ENCODE measurements at regions of chr11 and their contacts with region 1.

Region 1: GRCh38 chr11:64742889-64743590 is 902 bp downstream of the RASGRP2 start:
- DNase-seq: peak; percentile 60 to 91 (median 78)
- ATAC-seq: peak; percentile 45
- H3K4me3 ChIP-seq: peak overlapping the region; percentile 98
- H3K4me3 Mint-ChIP-seq: peak overlapping the region in 9 of 10 donors; percentile 89 to 99 (median 97)
- H3K27ac ChIP-seq: peak overlapping the region; percentile 97
- H3K27ac Mint-ChIP-seq: peak overlapping the region in 5 of 9 donors; percentile 88 to 100 (median 98)
- H3K4me1 ChIP-seq: peaks cover 9 to 16% of the 10 kb centered on the region in 2 donors
- H3K4me1 Mint-ChIP-seq: peaks cover 18 to 47% (median 39%) of the 10 kb centered on the region in 7 donors
- H3K27me3 ChIP-seq: no peaks in the 10 kb centered on the region
- H3K27me3 Mint-ChIP-seq: no peaks in the 10 kb centered on the region

Region 2: DNA sequence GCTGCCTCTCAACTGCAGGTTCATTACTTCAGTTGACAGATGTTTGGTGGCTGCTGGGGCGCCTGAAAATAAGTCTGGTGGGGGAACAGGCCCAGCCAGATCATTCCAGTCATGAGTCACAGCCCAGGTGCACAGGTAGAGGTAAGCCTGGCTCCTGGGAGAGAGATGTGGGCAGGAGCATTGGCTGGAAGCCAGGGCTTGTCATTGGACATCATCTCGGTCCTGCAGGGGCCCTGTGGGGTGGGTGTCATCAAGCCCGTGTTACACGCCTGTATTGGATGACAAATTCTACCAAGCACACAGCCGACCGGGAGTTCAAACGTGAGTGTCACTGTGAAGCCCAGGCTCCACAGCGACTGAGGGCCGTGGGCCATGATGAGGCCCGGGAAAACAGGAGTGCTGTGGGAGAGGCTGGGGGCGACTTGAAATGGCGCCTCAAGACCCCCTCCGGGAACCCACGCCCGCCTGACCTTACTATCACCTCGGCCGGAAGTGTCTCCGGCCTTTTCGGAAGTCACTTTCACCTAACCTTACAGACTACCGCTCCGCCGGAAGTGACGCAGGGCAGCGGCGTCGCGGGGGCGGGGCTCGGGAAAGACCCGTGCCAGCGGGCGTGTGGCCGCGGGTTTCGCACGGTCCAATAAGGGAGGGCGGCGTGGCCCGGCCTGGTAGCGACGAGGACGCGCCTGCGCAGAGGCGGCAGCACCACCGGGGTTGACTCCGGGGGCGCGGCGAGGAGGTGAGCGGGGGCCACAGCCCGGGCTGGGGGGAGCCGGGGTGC is 502.5 kb before region 1 on chr11 and contains the start of gene FKBP2:
- CTCF ChIA-PET with region 1: no interaction called
- POLR2A ChIA-PET with region 1: interaction called, 4 read pairs
- intact Hi-C with region 1: loop called in 1 of 2 experiments (anchors 5 kb)
- DNase-seq: peak; percentile 97 to 99 (median 98)
- ATAC-seq: peak; percentile 78
- H3K4me3 ChIP-seq: peak within 1 kb of the TSS; percentile 73
- H3K4me3 Mint-ChIP-seq: peak within 1 kb of the TSS; percentile 80 to 95 (median 89)
- H3K27ac ChIP-seq: peak within 1 kb of the TSS; percentile 99
- H3K27ac Mint-ChIP-seq: peak within 1 kb of the TSS; percentile 97 to 100 (median 99)
- H3K4me1 ChIP-seq: peaks cover 24 to 28% of the 10 kb centered on the region in 2 donors
- H3K4me1 Mint-ChIP-seq: peaks cover 9 to 46% (median 31%) of the 10 kb centered on the region in 7 donors
- H3K27me3 ChIP-seq: no peaks in the 10 kb centered on the region
- H3K27me3 Mint-ChIP-seq: no peaks in the 10 kb centered on the region
- total RNA-seq, gene FKBP2: 20.3 to 46.6 (median 33.5) TPM

Region 3: GRCh38 chr11:64688534-64688982 is 54.5 kb before region 1 on chr11:
- CTCF ChIA-PET with region 1: interaction called, 11 read pairs
- POLR2A ChIA-PET with region 1: interaction called, 9 read pairs
- intact Hi-C with region 1: loop called (anchors 1 kb)
- DNase-seq: peak; percentile 76 to 91 (median 86)
- ATAC-seq: peak; percentile 99
- H3K4me3 ChIP-seq: peak overlapping the region; percentile 53
- H3K4me3 Mint-ChIP-seq: peak overlapping the region; percentile 30 to 76 (median 58)
- H3K27ac ChIP-seq: no peak overlapping the region
- H3K27ac Mint-ChIP-seq: peak overlapping the region in 5 of 9 donors; percentile 13 to 80 (median 25)
- H3K4me1 ChIP-seq: peaks cover 6 to 7% of the 10 kb centered on the region in 2 donors
- H3K4me1 Mint-ChIP-seq: peaks cover 9 to 29% (median 23%) of the 10 kb centered on the region in 7 donors
- H3K27me3 ChIP-seq: peaks cover under 1 to 2% of the 10 kb centered on the region in 2 donors
- H3K27me3 Mint-ChIP-seq: peaks cover 16 to 40% (median 18%) of the 10 kb centered on the region in 5 donors

Region 4: GRCh38 chr11:64767344-64768299 is 24.6 kb after region 1 on chr11:
- CTCF ChIA-PET with region 1: interaction called, 305 read pairs
- POLR2A ChIA-PET with region 1: interaction called, 1,956 read pairs
- intact Hi-C with region 1: loop called (anchors 1 kb)
- DNase-seq: peak; percentile 65 to 86 (median 78)
- ATAC-seq: peak; percentile 53
- H3K4me3 ChIP-seq: no peak overlapping the region
- H3K4me3 Mint-ChIP-seq: peak overlapping the region; percentile 51 to 96 (median 78)
- H3K27ac ChIP-seq: peak overlapping the region; percentile 69
- H3K27ac Mint-ChIP-seq: peak overlapping the region; percentile 79 to 97 (median 90)
- H3K4me1 ChIP-seq: peaks cover 54 to 84% of the 10 kb centered on the region in 2 donors
- H3K4me1 Mint-ChIP-seq: peaks cover 59 to 97% (median 88%) of the 10 kb centered on the region in 7 donors
- H3K27me3 ChIP-seq: no peaks in the 10 kb centered on the region
- H3K27me3 Mint-ChIP-seq: no peaks in the 10 kb centered on the region

Region 5: DNA sequence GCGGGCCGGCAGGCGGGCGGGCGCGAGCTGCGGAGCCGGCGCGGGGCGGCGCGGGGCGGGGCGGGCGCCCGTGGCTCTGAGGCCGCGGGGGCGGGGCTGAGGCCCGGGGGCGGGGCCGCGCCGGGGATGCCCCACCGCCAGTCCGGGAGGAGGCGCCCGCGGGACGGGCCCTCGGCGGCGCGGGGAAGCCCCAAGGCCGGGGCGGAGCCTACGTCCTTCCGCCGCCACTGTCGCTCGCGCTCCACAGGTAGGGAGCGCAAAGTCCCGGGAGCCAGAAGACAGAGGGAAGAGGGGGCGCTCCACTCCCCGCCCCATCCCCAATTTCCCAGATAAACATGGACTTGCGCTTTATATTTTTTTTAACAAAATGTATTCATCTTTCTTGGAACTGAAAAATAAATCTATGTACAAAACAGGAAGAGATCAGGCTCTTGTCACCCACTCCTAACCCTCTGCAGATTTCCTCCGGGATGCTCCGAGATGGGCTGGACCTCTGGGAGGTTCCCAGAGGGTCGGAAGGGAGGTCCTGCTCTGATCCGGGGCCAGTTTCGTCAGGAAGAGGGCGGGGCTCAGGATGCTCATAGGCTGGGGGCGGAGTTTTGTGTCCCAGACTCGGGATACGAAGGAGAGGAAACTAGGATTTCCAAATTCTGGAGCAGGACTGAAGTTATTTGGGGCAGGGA is 60.3 kb after region 1 on chr11 and contains the start of gene MAP4K2:
- CTCF ChIA-PET with region 1: interaction called, 6 read pairs
- POLR2A ChIA-PET with region 1: interaction called, 57 read pairs
- intact Hi-C with region 1: loop called in 1 of 2 experiments (anchors 1 kb)
- DNase-seq: peak; percentile 80 to 96 (median 87)
- ATAC-seq: peak; percentile 98
- H3K4me3 ChIP-seq: peak within 1 kb of the TSS; percentile 91
- H3K4me3 Mint-ChIP-seq: peak within 1 kb of the TSS; percentile 85 to 92 (median 88)
- H3K27ac ChIP-seq: peak within 1 kb of the TSS; percentile 98
- H3K27ac Mint-ChIP-seq: peak within 1 kb of the TSS; percentile 82 to 97 (median 95)
- H3K4me1 ChIP-seq: peaks cover 9 to 23% of the 10 kb centered on the region in 2 donors
- H3K4me1 Mint-ChIP-seq: peaks cover 27 to 43% (median 32%) of the 10 kb centered on the region in 7 donors
- H3K27me3 ChIP-seq: no peaks in the 10 kb centered on the region
- H3K27me3 Mint-ChIP-seq: no peaks in the 10 kb centered on the region
- total RNA-seq, gene MAP4K2: 75.2 to 130 (median 84.3) TPM

Region 6: GRCh38 chr11:64864473-64865285 is 121.6 kb after region 1 on chr11:
- CTCF ChIA-PET with region 1: no interaction called
- POLR2A ChIA-PET with region 1: interaction called, 27 read pairs
- intact Hi-C with region 1: no loop called
- DNase-seq: peak in 1 of 9 donors; percentile 63
- ATAC-seq: no peak
- H3K4me3 ChIP-seq: peak overlapping the region; percentile 45
- H3K4me3 Mint-ChIP-seq: peak overlapping the region; percentile 45 to 91 (median 78)
- H3K27ac ChIP-seq: peak overlapping the region; percentile 76
- H3K27ac Mint-ChIP-seq: peak overlapping the region; percentile 89 to 98 (median 96)
- H3K4me1 ChIP-seq: peaks cover 86 to 98% of the 10 kb centered on the region in 2 donors
- H3K4me1 Mint-ChIP-seq: peaks cover 68 to 94% (median 82%) of the 10 kb centered on the region in 7 donors
- H3K27me3 ChIP-seq: no peaks in the 10 kb centered on the region
- H3K27me3 Mint-ChIP-seq: no peaks in the 10 kb centered on the region

Region 7: DNA sequence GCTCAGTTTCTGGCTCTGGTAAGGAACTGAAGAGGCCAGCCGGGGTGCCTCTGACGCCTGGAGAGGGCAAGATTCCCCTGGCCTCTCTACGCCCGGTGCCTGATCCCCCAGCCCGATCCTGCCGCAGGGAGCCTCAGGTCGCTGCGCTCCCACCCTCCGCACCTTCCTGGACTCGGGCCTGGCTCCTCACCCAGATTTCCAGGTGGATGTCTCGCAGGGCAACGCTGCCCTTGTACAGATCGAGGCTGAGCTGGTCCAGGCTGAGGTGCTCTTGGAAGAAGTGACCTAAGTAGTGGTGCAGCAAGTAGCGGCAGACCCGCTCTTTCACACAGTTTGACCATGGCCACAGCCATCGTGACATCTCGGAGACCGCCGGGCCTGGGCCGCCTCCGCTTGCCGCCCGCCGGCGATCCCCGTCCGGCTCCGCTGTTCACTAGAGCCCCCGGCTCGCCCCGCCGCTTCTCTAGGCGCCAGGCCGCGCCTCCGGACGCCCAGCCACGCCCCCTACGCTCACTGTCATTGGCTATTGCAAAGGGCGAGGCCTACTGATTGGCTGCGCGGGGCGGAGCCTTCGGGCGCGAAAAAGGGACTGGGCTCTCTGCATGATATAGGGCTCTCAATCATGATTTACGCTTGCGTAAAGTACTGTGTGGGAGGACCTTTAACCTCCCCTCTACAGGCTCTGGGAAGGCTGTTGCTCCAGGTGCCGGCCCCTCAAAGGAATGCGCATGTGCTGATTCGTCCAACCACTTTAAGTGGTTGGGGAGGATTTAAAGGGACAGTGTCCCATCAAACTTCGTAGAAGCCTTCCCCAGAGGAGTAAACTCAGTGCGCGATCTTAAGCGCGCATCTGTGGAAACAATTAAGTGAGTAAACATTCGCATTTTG is 174.0 kb after region 1 on chr11 and contains the start of gene ATG2A:
- CTCF ChIA-PET with region 1: no interaction called
- POLR2A ChIA-PET with region 1: interaction called, 3 read pairs
- intact Hi-C with region 1: loop called in 1 of 2 experiments (anchors 1 kb)
- DNase-seq: peak; percentile 95 to 100 (median 99)
- ATAC-seq: peak; percentile 97
- H3K4me3 ChIP-seq: peak within 1 kb of the TSS; percentile 92
- H3K4me3 Mint-ChIP-seq: peak within 1 kb of the TSS; percentile 88 to 98 (median 91)
- H3K27ac ChIP-seq: peak within 1 kb of the TSS; percentile 83
- H3K27ac Mint-ChIP-seq: peak within 1 kb of the TSS; percentile 81 to 99 (median 91)
- H3K4me1 ChIP-seq: peaks cover 18 to 22% of the 10 kb centered on the region in 2 donors
- H3K4me1 Mint-ChIP-seq: peaks cover 14 to 33% (median 25%) of the 10 kb centered on the region in 7 donors
- H3K27me3 ChIP-seq: no peaks in the 10 kb centered on the region
- H3K27me3 Mint-ChIP-seq: no peaks in the 10 kb centered on the region
- total RNA-seq, gene ATG2A: 30.6 to 105 (median 36.2) TPM

Measured in naive thymus-derived CD4-positive, alpha-beta T cell (primary cell).